HepG2 (cell line): ENCODE measurements at regions of chr18 and their contacts with region 1.

Region 1: DNA sequence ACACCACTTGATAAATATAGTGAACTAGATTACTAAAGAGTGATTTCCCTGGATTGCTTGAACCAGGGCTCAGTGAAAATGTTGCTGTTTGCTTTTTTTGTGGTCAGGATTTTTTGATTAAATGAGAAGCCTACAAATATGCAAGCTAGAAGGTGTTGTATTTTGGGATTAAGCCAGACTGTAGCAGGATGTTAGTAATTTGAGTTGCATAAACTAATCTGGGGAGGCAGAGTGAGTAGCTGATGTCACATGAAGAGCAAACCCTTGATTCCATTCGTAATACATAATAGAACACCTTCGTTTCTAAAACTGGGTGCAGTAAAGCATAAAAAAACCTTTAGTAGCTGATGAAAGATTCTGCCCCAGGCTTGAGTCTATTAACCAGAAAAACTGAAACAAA is 32.0 kb downstream of the NEDD4L start:
- DNase-seq: no peak
- ATAC-seq: no peak
- H3K4me3 ChIP-seq: no peak overlapping the region
- H3K27ac ChIP-seq: no peak overlapping the region
- H3K4me1 ChIP-seq: peaks cover 15% of the 10 kb centered on the region
- H3K27me3 ChIP-seq: no peaks in the 10 kb centered on the region
- CTCF ChIP-seq: no peak
- EP300 ChIP-seq: no peak
- POLR2A ChIP-seq: no peak
- RAD21 ChIP-seq: no peak

Region 2: GRCh38 chr18:58087917-58088692 is 12.1 kb after region 1 on chr18:
- CTCF ChIA-PET with region 1: no interaction called
- POLR2A ChIA-PET with region 1: no interaction called
- in situ Hi-C with region 1: no loop called
- intact Hi-C with region 1: loop called (anchors 1 kb)
- DNase-seq: no peak
- ATAC-seq: no peak
- H3K4me3 ChIP-seq: no peak overlapping the region
- H3K27ac ChIP-seq: no peak overlapping the region
- H3K4me1 ChIP-seq: no peaks in the 10 kb centered on the region
- H3K27me3 ChIP-seq: no peaks in the 10 kb centered on the region
- CTCF ChIP-seq: no peak
- EP300 ChIP-seq: no peak
- POLR2A ChIP-seq: no peak
- RAD21 ChIP-seq: no peak

Region 3: GRCh38 chr18:58180738-58181353 is 104.8 kb after region 1 on chr18:
- CTCF ChIA-PET with region 1: no interaction called
- POLR2A ChIA-PET with region 1: no interaction called
- in situ Hi-C with region 1: no loop called
- intact Hi-C with region 1: no loop called
- DNase-seq: peak; percentile 37
- ATAC-seq: no peak; the same call in 2 of the 3 replicates
- H3K4me3 ChIP-seq: no peak overlapping the region
- H3K27ac ChIP-seq: no peak overlapping the region
- H3K4me1 ChIP-seq: peaks cover 25% of the 10 kb centered on the region
- H3K27me3 ChIP-seq: no peaks in the 10 kb centered on the region
- CTCF ChIP-seq: peak; percentile 68
- EP300 ChIP-seq: no peak
- POLR2A ChIP-seq: no peak
- RAD21 ChIP-seq: no peak

Region 4: GRCh38 chr18:58362027-58362575 is 286.0 kb after region 1 on chr18:
- CTCF ChIA-PET with region 1: no interaction called
- POLR2A ChIA-PET with region 1: no interaction called
- in situ Hi-C with region 1: no loop called
- intact Hi-C with region 1: no loop called
- DNase-seq: no peak
- ATAC-seq: no peak
- H3K4me3 ChIP-seq: no peak overlapping the region
- H3K27ac ChIP-seq: no peak overlapping the region
- H3K4me1 ChIP-seq: no peaks in the 10 kb centered on the region
- H3K27me3 ChIP-seq: no peaks in the 10 kb centered on the region
- CTCF ChIP-seq: no peak
- EP300 ChIP-seq: no peak
- POLR2A ChIP-seq: no peak
- RAD21 ChIP-seq: no peak